ENCODE measurements at regions of chr3 and their contacts with region 1.

Region 1: GRCh38 chr3:99031778-99032177 is 130.3 kb upstream of the DCBLD2 start:
- DNase-seq: no peak
- H3K4me3 ChIP-seq: no peak overlapping the region
- H3K27ac ChIP-seq: no peak overlapping the region
- H3K4me1 ChIP-seq: no peaks in the 10 kb centered on the region
- H3K27me3 ChIP-seq: no peaks in the 10 kb centered on the region
- CTCF ChIP-seq: no peak
- POLR2A ChIP-seq: no peak

Region 2: GRCh38 chr3:98962189-98962930 is 69.4 kb before region 1 on chr3:
- intact Hi-C with region 1: no loop called
- DNase-seq: no peak
- H3K4me3 ChIP-seq: no peak overlapping the region
- H3K27ac ChIP-seq: no peak overlapping the region
- H3K4me1 ChIP-seq: no peaks in the 10 kb centered on the region
- H3K27me3 ChIP-seq: no peaks in the 10 kb centered on the region
- CTCF ChIP-seq: no peak
- POLR2A ChIP-seq: no peak

Region 3: DNA sequence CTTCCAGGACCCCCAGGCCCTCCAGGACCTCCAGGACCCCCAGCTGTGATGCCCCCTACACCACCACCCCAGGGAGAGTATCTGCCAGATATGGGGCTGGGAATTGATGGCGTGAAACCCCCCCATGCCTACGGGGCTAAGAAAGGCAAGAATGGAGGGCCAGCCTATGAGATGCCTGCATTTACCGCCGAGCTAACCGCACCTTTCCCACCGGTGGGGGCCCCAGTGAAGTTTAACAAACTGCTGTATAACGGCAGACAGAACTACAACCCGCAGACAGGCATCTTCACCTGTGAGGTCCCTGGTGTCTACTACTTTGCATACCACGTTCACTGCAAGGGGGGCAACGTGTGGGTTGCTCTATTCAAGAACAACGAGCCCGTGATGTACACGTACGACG is 763.8 kb after region 1 on chr3:
- intact Hi-C with region 1: loop called (anchors 5 kb)
- DNase-seq: no peak
- H3K4me3 ChIP-seq: no peak overlapping the region
- H3K27ac ChIP-seq: no peak overlapping the region
- H3K4me1 ChIP-seq: no peaks in the 10 kb centered on the region
- H3K27me3 ChIP-seq: no peaks in the 10 kb centered on the region
- CTCF ChIP-seq: no peak
- POLR2A ChIP-seq: no peak